Naive thymus-derived CD4-positive, alpha-beta T cell (primary cell): ENCODE measurements at regions of chr17 and their contacts with region 1.

Region 1: GRCh38 chr17:64129764-64130558 is at the start of gene ERN1:
- DNase-seq: peak; percentile 84 to 93 (median 91)
- ATAC-seq: peak; percentile 96
- H3K4me3 ChIP-seq: peak within 1 kb of the TSS; percentile 69
- H3K4me3 Mint-ChIP-seq: peak within 1 kb of the TSS; percentile 85 to 97 (median 94)
- H3K27ac ChIP-seq: peak within 1 kb of the TSS; percentile 77
- H3K27ac Mint-ChIP-seq: peak within 1 kb of the TSS; percentile 83 to 98 (median 93)
- H3K4me1 ChIP-seq: peaks cover 12 to 32% of the 10 kb centered on the region in 2 donors
- H3K4me1 Mint-ChIP-seq: peaks cover 28 to 57% (median 53%) of the 10 kb centered on the region in 7 donors
- H3K27me3 ChIP-seq: no peaks in the 10 kb centered on the region
- H3K27me3 Mint-ChIP-seq: no peaks in the 10 kb centered on the region
- total RNA-seq, gene ERN1: 52.6 to 110 (median 62.9) TPM

Region 2: DNA sequence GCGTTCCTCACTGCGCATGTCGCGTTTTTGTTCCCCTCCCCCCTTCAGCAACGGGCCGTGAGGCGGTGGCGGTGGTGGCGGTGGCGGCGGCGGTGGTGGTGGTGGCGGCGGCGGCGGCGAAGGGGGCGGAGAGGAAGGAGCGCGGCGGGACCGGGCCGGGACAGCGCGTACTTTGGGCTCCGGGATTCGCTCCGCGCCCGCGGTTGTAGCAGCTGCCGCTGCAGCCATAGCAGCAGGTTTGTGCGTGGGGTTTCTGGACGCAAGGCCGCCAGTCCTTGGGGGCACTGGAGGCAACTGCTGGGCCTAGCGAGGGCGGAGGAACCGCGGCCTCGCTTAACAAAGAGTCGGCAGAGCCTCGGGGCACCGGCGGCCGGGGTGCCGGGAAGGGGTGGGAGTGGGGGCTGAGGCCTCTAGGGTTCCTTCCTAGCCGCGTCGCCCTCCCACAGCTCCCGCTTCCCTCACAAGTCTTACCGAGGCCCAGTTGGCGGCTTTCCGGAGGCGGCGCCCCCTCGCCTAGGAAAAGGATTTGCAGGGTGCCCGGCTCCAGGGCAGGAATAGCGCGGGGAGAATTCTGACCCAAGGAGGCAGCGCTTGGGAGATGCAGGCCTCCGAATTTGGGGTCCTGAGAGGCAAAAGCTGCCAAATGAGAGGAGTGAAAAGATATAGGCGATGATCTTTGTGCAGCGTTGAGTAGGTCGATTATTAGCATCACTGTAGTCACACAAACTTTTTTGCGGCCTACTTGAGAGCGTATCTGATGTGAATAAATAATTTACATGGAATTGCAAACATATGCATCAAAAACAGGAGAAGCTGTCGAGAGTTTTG is 355.6 kb before region 1 on chr17 and contains the start of gene DDX42:
- CTCF ChIA-PET with region 1: no interaction called
- POLR2A ChIA-PET with region 1: no interaction called
- intact Hi-C with region 1: no loop called
- DNase-seq: peak in 6 of 9 donors; percentile 13 to 92 (median 53)
- ATAC-seq: no peak
- H3K4me3 ChIP-seq: peak within 1 kb of the TSS; percentile 85
- H3K4me3 Mint-ChIP-seq: peak within 1 kb of the TSS; percentile 91 to 99 (median 98)
- H3K27ac ChIP-seq: peak within 1 kb of the TSS; percentile 100
- H3K27ac Mint-ChIP-seq: peak within 1 kb of the TSS; percentile 97 to 100 (median 99)
- H3K4me1 ChIP-seq: peaks cover 21 to 46% of the 10 kb centered on the region in 2 donors
- H3K4me1 Mint-ChIP-seq: peaks cover 32 to 84% (median 68%) of the 10 kb centered on the region in 7 donors
- H3K27me3 ChIP-seq: no peaks in the 10 kb centered on the region
- H3K27me3 Mint-ChIP-seq: peaks cover 0 to 7% (median 0%) of the 10 kb centered on the region in 5 donors
- total RNA-seq, gene DDX42: 101 to 192 (median 139) TPM

Region 3: GRCh38 chr17:63842540-63843386 is 287.2 kb before region 1 on chr17 and contains the start of gene SMARCD2:
- CTCF ChIA-PET with region 1: no interaction called
- POLR2A ChIA-PET with region 1: no interaction called
- intact Hi-C with region 1: loop called (anchors 1 kb)
- DNase-seq: peak; percentile 94 to 99 (median 98)
- ATAC-seq: peak; percentile 96
- H3K4me3 ChIP-seq: peak within 1 kb of the TSS; percentile 87
- H3K4me3 Mint-ChIP-seq: peak within 1 kb of the TSS; percentile 92 to 98 (median 95)
- H3K27ac ChIP-seq: peak within 1 kb of the TSS; percentile 96
- H3K27ac Mint-ChIP-seq: peak within 1 kb of the TSS; percentile 87 to 95 (median 92)
- H3K4me1 ChIP-seq: peaks cover 34 to 36% of the 10 kb centered on the region in 2 donors
- H3K4me1 Mint-ChIP-seq: peaks cover 27 to 52% (median 44%) of the 10 kb centered on the region in 7 donors
- H3K27me3 ChIP-seq: no peaks in the 10 kb centered on the region
- H3K27me3 Mint-ChIP-seq: no peaks in the 10 kb centered on the region
- total RNA-seq, gene SMARCD2: 102 to 148 (median 109) TPM

Region 4: DNA sequence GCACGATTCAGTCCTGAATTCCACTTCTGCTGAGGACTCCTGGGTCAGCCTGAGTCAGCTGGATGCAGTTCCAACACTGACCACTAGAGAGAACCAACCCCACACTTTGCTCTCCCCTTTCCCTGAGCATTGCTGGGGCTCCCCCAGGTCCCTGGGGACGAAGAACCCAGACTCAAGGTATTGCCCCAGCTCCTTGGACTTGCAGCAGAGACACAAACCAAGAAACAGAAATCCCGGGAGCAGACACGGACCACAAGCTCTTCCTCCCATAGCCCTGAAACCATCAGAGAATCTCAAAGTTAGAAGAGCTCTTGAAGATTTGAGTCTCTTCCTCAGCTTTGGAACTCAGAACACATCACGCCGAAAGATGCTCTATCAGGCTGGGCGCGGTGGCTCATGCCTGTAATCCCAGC is 210.6 kb before region 1 on chr17:
- CTCF ChIA-PET with region 1: interaction called, 50 read pairs
- POLR2A ChIA-PET with region 1: interaction called, 8 read pairs
- intact Hi-C with region 1: loop called (anchors 1 to 2 kb)
- DNase-seq: peak; percentile 53 to 81 (median 68)
- ATAC-seq: peak; percentile 97
- H3K4me3 ChIP-seq: no peak overlapping the region
- H3K4me3 Mint-ChIP-seq: no peak overlapping the region
- H3K27ac ChIP-seq: no peak overlapping the region
- H3K27ac Mint-ChIP-seq: peak overlapping the region in 8 of 9 donors; percentile 3 to 86 (median 8)
- H3K4me1 ChIP-seq: peaks cover 0 to 4% of the 10 kb centered on the region in 2 donors
- H3K4me1 Mint-ChIP-seq: peaks cover 5 to 10% (median 9%) of the 10 kb centered on the region in 7 donors
- H3K27me3 ChIP-seq: no peaks in the 10 kb centered on the region
- H3K27me3 Mint-ChIP-seq: peaks cover 0 to 16% (median 0%) of the 10 kb centered on the region in 5 donors

Region 5: GRCh38 chr17:64051153-64051552 is 78.8 kb before region 1 on chr17:
- CTCF ChIA-PET with region 1: interaction called, 19 read pairs
- POLR2A ChIA-PET with region 1: interaction called, 80 read pairs
- intact Hi-C with region 1: loop called (anchors 1 kb)
- DNase-seq: peak in 7 of 9 donors; percentile 58 to 86 (median 76)
- ATAC-seq: peak; percentile 99
- H3K4me3 ChIP-seq: peak overlapping the region; percentile 19
- H3K4me3 Mint-ChIP-seq: peak overlapping the region; percentile 1 to 73 (median 60)
- H3K27ac ChIP-seq: peak overlapping the region; percentile 55
- H3K27ac Mint-ChIP-seq: peak overlapping the region; percentile 86 to 97 (median 95)
- H3K4me1 ChIP-seq: peaks cover 32 to 37% of the 10 kb centered on the region in 2 donors
- H3K4me1 Mint-ChIP-seq: peaks cover 26 to 52% (median 43%) of the 10 kb centered on the region in 7 donors
- H3K27me3 ChIP-seq: no peaks in the 10 kb centered on the region
- H3K27me3 Mint-ChIP-seq: no peaks in the 10 kb centered on the region

Region 6: DNA sequence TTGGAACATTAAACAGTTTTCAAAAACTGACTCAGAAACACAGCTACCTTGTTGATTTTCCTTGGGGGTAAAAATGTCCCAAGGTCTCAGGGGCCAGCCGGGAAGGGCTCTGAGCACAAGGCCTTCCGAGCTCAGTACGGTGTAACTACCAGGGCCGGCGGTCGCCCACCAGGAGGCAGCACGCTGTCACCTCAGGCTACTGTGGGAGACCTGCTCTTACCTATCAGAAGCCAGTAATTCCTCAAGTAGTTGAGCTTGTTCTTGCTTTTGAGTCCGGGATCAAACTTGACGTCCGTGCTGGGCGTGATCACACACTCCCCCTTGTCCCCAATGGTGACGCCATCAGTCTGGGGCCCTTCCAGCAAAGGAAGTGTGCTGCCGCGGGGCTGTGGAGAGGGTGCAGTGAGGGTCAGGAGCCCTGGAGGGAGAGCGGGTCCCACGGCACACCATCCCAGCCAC is 66.2 kb before region 1 on chr17:
- CTCF ChIA-PET with region 1: interaction called, 142 read pairs
- POLR2A ChIA-PET with region 1: interaction called, 88 read pairs
- intact Hi-C with region 1: loop called (anchors 1 kb)
- DNase-seq: peak; percentile 36 to 71 (median 56)
- ATAC-seq: peak; percentile 73
- H3K4me3 ChIP-seq: no peak overlapping the region
- H3K4me3 Mint-ChIP-seq: peak overlapping the region in 3 of 10 donors; percentile 33 to 64 (median 54)
- H3K27ac ChIP-seq: no peak overlapping the region
- H3K27ac Mint-ChIP-seq: peak overlapping the region in 5 of 9 donors; percentile 51 to 80 (median 69)
- H3K4me1 ChIP-seq: peaks cover 23 to 84% of the 10 kb centered on the region in 2 donors
- H3K4me1 Mint-ChIP-seq: peaks cover 40 to 88% (median 56%) of the 10 kb centered on the region in 7 donors
- H3K27me3 ChIP-seq: no peaks in the 10 kb centered on the region
- H3K27me3 Mint-ChIP-seq: no peaks in the 10 kb centered on the region

Region 7: DNA sequence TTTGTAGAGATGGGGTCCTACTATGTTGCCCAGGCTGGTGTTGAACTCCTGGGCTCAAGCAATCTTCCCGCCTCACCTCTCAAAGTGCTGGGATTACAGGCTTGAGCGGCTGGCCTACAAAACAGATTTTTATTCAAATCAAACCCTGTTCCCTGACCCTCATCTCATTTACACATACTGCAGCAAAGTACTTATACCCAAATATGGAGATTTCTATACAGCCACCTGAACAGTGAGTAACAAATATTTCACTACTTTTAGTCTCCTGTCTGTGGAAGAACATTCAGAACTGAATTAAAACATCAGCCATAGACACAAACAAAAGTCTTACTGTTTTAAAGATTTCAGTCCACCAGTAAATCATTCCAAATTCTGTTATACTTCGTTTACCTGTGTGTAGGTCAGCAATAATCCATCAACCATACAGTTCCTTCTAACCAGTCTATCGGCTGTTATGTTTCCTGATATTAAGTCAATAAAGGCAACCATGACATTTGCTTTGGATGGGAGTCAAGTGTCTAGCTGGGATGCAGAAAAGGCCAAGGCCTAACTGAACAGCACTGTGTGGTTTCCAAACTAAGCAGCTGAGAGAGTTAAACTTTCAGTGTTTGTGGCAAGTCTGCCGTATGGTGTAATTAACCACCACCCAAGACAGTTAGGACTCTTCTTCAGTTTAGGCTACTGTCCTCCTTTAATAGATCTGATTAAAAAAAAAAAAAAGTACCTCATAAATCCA is 22.3 kb before region 1 on chr17:
- CTCF ChIA-PET with region 1: interaction called, 3 read pairs
- POLR2A ChIA-PET with region 1: interaction called, 39 read pairs
- intact Hi-C with region 1: loop called in 1 of 2 experiments (anchors 1 kb)
- DNase-seq: no peak
- ATAC-seq: no peak
- H3K4me3 ChIP-seq: no peak overlapping the region
- H3K4me3 Mint-ChIP-seq: peak overlapping the region in 6 of 10 donors; percentile 5 to 68 (median 40)
- H3K27ac ChIP-seq: peak overlapping the region; percentile 32
- H3K27ac Mint-ChIP-seq: peak overlapping the region; percentile 54 to 91 (median 85)
- H3K4me1 ChIP-seq: peaks cover 38 to 51% of the 10 kb centered on the region in 2 donors
- H3K4me1 Mint-ChIP-seq: peaks cover 32 to 77% (median 53%) of the 10 kb centered on the region in 7 donors
- H3K27me3 ChIP-seq: no peaks in the 10 kb centered on the region
- H3K27me3 Mint-ChIP-seq: no peaks in the 10 kb centered on the region

Region 8: DNA sequence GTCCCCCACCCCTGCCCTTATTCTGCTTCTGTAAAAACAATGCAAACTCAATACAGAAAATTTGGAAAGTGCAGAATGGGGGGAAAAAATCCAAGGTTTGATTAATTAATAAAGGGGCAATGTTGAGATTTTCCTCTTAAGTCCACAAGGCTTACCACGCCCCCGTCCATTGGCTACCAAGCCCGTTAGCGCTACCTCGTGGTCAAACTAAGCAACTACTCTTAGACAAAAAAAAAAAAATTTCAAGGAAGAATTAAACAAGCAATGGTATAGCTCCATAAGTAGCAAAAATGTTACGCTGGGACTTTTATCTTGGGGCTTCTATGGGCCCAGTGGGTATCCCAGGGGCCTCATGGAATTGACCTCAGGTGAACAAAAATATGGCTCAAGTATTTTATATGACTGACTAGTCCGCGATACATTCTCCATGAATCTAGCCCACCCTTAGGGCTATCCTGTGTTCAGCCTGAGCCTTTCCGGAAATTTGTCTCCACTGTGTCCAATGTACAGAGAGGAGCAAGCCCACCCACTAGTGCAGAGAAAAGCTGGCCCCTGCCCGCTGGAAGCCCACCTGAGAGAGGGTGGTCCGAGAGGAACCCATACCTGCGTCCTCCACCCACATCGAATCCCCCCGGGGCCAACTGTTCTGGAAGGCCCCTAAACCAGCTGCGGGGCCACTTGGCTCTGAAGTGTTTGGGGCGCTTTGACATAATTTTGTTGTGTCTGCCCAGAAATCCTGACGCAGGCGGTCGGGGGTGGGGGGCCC is 152.2 kb after region 1 on chr17:
- CTCF ChIA-PET with region 1: interaction called, 5 read pairs
- POLR2A ChIA-PET with region 1: no interaction called
- intact Hi-C with region 1: loop called in 1 of 2 experiments (anchors 5 kb)
- DNase-seq: peak in 8 of 9 donors; percentile 31 to 61 (median 54)
- ATAC-seq: peak; percentile 83
- H3K4me3 ChIP-seq: no peak overlapping the region
- H3K4me3 Mint-ChIP-seq: no peak overlapping the region
- H3K27ac ChIP-seq: no peak overlapping the region
- H3K27ac Mint-ChIP-seq: peak overlapping the region in 1 of 9 donors; percentile 20
- H3K4me1 ChIP-seq: peaks cover 0 to 5% of the 10 kb centered on the region in 2 donors
- H3K4me1 Mint-ChIP-seq: peaks cover 0 to 7% (median 0%) of the 10 kb centered on the region in 7 donors
- H3K27me3 ChIP-seq: no peaks in the 10 kb centered on the region
- H3K27me3 Mint-ChIP-seq: peaks cover 0 to 8% (median 0%) of the 10 kb centered on the region in 5 donors

Region 9: DNA sequence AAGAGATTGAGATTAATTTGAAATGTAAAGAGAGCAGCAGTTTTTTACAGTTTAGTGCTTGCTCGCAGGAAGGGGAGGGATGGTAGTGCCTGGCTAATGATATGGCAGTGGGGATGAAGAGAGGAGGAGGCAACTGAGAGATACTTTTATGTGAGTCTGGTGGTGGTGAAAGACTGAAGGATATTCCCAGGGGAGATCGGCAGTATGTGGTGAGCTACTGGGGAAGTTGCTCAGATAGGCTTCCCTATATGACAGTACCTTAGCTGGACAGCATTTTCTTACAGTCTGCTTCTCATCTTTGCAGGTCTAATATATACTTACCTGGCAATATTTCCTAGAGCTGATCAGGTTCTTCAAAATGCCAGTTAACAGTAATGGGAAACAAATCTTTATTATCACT is 385.5 kb after region 1 on chr17:
- CTCF ChIA-PET with region 1: no interaction called
- POLR2A ChIA-PET with region 1: no interaction called
- intact Hi-C with region 1: no loop called
- DNase-seq: no peak
- ATAC-seq: no peak
- H3K4me3 ChIP-seq: no peak overlapping the region
- H3K4me3 Mint-ChIP-seq: no peak overlapping the region
- H3K27ac ChIP-seq: no peak overlapping the region
- H3K27ac Mint-ChIP-seq: peak overlapping the region in 6 of 9 donors; percentile 3 to 40 (median 7)
- H3K4me1 ChIP-seq: no peaks in the 10 kb centered on the region
- H3K4me1 Mint-ChIP-seq: peaks cover 15 to 46% (median 40%) of the 10 kb centered on the region in 7 donors
- H3K27me3 ChIP-seq: no peaks in the 10 kb centered on the region
- H3K27me3 Mint-ChIP-seq: no peaks in the 10 kb centered on the region